Right ventricle myocardium inferior (tissue), 1 donor: ENCODE measurements at regions of chr7 and their contacts with region 1.

Region 1: DNA sequence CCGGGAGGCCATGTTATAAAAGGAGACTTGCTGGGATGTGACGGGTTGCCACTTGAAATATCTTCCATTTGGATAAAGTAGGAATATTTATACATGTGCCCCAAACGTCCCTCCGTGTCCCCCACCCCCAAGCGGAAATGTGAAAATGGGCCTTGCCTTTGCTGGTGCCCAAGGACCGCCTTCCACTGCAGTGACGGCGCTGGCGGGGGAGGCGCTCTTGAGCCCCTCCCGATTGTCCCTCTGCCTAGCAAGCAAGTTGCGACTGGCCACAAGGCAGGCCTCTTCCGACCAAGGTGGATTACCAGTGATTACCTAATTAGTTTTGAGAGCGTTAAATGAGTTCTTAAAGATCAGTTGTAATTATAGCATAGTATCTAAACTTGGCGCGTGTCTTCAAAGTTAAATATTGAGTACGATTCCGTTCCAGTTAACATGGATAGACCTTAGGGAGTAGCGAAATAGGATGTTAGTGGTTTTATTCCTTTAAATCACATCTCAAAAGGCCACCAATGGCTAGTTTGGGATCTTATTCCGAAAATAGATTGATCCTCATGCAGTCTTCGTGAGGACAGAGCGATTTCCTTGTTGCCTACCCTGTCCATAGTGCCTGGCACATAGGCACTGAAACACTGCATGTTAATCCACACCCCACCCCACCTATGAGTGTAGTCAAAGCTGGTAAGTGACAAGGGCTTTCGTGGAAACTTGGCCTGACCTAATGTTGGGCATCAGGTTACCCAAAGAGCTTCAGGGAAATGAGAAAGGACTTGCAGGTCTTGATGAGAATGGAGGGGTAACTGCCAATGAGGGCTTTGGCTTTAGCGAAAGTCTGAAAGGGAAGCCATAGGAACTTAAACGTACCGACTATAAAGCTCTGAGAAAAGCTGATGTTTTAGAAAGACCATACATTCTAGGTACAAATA is 1.1 kb downstream of the PPIA start:
- DNase-seq: peak; percentile 94
- ATAC-seq: peak; percentile 78

Region 2: GRCh38 chr7:44581879-44582603 is 215.5 kb before region 1 on chr7 and contains the start of gene TMED4:
- intact Hi-C with region 1: loop called (anchors 1 kb)
- DNase-seq: peak; percentile 100
- ATAC-seq: peak; percentile 99
- total RNA-seq, gene TMED4: 49.7 TPM

Region 3: DNA sequence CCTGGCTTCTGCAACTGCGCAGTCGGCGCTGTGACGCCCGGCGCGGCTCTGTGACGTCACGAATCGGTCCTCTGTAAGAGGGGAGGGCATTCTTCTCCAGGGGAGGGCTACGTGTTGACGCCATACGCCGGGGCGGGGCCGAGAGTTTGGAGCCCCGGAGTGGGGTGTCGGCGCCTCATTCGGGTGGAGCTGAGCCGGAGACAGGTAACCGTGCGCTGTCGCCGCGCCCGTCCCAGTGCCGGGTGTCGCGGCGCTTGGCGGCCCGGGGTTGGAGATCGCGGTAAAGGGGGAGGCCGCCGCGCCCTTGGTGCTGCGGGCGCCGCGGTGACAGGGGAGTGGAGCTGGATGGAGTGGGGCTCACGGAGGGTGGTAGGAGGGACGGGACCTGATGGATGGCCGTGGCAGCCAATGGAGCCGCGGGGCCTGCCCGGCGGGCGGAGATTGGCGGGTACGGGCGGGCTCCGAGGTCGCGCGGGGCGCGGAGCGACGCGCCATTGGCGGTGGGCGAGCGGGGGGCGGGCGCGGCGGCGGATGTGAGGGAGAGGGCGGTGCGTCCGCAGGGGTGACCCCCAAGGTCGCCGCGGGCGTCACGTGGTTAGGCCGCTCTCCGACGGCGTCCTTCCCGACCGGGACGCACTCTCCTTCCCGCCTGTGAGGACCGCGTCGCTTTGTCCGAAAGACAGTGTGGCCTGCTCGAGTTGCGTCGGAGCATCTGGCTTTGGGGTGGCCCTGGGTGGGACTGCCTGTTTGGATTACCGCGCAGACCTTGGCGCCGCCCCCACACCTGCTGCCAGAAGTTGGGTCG is 190.9 kb before region 1 on chr7 and contains the start of gene OGDH:
- intact Hi-C with region 1: loop called (anchors 1 kb)
- DNase-seq: peak; percentile 100
- ATAC-seq: peak; percentile 98
- total RNA-seq, gene OGDH: 679 TPM

Region 4: DNA sequence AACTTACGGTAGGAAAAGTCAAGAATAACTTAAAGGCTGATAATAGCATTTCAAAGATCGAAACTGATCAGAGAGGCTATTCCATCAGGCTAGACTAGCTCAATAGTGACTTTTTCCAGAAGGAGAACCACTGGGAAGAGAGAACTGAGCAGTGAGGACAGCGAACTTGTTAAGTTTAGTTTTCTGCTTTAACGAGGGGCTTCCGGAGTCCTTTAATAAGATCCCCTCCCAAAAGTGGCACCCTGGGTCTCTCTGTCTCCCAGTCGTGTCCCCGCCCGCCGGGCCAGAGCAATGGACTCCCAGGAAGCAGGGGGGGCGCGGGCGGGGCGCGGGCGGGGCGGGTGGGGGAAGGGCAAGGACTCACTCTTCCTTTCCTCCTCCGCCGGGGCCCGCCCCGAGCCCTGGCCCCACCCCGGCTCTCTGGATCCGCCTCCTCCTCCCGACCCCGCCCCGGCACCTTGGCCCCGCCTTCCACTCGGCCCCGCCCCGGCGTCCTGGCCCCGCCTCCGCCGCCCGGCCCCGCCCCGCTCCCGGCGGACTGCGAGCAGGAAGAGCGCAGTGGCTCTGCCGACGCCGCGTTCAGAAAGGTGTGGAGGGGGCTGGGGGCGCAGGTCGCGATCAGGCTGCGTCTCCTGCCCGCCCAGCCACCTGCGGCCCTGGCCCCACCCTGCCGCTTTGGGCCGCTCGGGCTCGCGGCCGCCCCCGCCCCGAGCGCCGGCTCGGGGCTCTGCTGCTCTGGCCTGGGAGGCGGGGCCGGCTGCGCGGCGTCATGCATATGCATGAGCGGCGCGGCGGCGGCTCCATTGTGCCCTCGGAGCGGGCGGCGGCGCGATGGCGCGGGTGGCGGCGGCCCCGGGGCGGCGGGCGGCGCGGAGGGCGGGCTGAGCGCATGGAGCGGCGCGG is 49.3 kb before region 1 on chr7 and contains the start of gene ZMIZ2:
- intact Hi-C with region 1: loop called (anchors 2 kb)
- DNase-seq: peak; percentile 98
- ATAC-seq: peak; percentile 98
- total RNA-seq, gene ZMIZ2: 62.2 TPM

Region 5: DNA sequence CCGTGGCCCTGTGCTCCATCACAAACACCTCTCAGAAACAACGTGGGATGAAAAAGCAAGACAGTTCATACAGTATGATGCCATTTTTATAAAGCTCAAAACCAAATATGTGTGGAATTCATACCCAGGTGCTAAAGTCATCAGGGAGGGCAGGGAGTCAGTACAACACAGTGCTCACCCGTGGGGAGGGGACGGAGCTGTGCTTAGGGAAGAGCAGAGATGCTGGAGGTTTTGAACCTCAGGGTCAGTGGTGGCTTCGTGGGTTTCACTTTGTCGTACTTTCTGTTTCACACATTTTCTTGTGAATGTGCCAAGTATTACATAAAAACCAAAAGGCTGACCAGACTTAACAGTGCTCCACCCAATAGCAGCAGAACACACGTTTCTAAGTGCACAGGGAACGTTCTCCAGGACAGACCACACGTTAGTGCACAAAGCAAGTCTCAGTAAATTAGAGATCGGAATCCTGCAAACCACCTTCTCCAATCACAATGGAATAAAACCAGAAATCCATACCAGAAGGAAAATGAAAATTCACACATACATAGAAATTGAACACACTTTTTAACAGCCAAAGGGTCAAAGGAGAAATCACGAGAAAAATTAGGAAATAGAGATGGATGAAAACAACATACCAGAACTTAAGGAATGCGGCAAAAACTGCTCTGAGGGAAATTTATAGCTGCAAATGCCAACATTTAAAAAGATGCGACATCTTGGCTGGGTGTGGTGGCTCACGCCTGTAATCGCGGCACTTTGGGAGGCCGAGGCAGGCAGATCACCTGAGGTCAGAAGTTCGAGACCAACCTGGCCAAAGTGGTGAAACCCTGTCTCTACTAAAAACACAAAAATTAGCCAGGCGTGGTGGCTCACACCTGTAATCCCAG is 27.6 kb before region 1 on chr7:
- intact Hi-C with region 1: loop called (anchors 2 kb)
- DNase-seq: peak; percentile 44
- ATAC-seq: peak; percentile 59

Region 6: GRCh38 chr7:44814919-44815318 is 17.3 kb after region 1 on chr7:
- intact Hi-C with region 1: no loop called
- DNase-seq: no peak
- ATAC-seq: no peak

Region 7: DNA sequence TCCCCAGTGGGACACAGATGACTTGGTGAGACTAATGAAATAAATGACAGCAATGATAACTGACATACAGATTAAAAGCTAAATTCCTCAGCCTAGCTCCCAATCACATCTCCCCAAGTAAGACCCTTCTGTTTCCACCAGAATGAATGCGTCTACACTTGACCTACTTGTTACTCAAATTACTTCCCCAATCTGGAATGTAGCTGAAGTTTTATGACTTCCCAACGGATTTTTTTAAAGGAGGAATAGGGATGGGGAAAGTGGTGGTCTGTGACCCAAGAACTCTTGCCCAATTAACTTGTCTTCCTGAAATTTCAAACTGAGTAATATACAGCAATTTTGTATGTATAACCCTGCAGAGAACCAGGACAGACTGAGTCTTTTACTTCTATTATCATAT is 41.2 kb after region 1 on chr7:
- intact Hi-C with region 1: no loop called
- DNase-seq: no peak
- ATAC-seq: no peak